Prostate gland (tissue), 2 donors: ENCODE measurements at regions of chr6 and their contacts with region 1.

Region 1: GRCh38 chr6:148166339-148166968 is 176.2 kb upstream of the SASH1 start:
- DNase-seq: peak; percentile 22
- H3K4me3 ChIP-seq: no peak overlapping the region
- H3K27ac ChIP-seq: no peak overlapping the region
- H3K4me1 ChIP-seq: no peaks in the 10 kb centered on the region
- H3K27me3 ChIP-seq: no peaks in the 10 kb centered on the region
- CTCF ChIP-seq: peak; percentile 27 to 82 (median 74)
- POLR2A ChIP-seq: no peak

Region 2: DNA sequence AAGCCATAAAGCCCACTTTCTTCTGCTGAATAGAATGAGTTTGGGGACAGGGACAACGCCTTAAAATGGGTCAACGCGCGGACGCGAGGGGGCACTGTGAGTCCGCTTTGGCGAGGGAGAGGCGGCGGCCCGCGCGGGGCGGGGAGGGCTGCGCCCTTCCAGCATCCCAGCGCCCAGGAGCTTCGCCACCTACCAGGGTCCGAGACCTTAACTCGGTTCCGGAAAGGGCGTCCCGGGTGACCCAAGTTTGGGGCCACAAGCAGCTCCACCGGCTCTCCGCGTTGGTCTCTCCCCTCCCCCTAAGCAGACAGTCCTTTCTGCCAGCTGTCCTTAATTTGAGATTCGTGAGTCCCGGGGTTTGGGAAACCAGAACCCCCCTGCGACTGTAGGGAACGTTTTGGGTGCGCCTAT is 659.7 kb before region 1 on chr6:
- intact Hi-C with region 1: loop called (anchors 2 kb)
- DNase-seq: peak; percentile 65
- H3K4me3 ChIP-seq: peak overlapping the region; percentile 38 to 48
- H3K27ac ChIP-seq: no peak overlapping the region
- H3K4me1 ChIP-seq: no peaks in the 10 kb centered on the region
- H3K27me3 ChIP-seq: no peaks in the 10 kb centered on the region
- CTCF ChIP-seq: peak; percentile 41 to 84 (median 72)
- POLR2A ChIP-seq: no peak

Region 3: DNA sequence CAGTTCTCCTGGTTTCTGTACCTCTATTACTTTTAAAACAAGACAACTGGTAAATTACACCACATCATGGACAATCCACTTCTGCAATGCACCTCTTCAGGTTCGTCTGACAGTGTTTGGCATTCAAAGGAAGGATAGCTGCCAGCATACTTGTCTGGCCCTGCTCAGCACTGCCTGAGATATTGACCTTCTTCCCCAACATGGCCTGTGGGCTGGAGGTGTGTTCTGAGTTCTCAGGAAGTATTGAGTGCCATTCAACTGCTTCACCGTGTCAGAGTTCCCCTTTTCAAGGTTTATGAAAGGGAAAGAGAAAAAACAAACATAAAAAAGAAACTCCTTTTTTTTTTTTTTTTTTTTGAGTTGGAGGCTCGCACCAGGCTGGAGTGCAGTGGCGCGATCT is 91.7 kb before region 1 on chr6:
- intact Hi-C with region 1: no loop called
- DNase-seq: peak; percentile 6
- H3K4me3 ChIP-seq: no peak overlapping the region
- H3K27ac ChIP-seq: no peak overlapping the region
- H3K4me1 ChIP-seq: no peaks in the 10 kb centered on the region
- H3K27me3 ChIP-seq: no peaks in the 10 kb centered on the region
- CTCF ChIP-seq: no peak
- POLR2A ChIP-seq: no peak